ENCODE measurements at regions of chr5 and their contacts with region 1.

Region 1: DNA sequence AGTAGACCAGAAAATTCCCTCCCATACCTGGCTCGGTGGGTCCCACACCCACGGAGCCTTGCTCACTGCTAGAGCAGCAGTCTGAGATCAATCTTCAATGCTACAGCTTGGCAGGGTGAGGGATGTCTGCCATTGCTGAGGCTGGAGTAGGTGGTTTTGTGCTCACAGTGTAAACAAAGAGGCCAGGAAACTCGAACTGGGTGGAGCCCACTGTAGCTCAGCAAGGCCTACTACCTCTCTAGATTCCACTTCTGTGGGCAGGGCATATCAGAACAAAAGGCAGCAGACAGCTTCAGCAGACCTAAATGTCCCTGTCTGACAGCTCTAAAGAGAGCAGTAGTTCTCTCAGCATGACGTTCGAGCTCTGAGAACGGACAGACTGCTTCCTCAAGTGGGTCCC is 5.6 kb upstream of the GZMA start:
- DNase-seq: peak; percentile 13 to 81 (median 60)
- ATAC-seq: peak; percentile 85
- H3K4me3 ChIP-seq: peak overlapping the region in 1 of 2 experiments; percentile 17
- H3K4me3 Mint-ChIP-seq: peak overlapping the region; percentile 57
- H3K27ac ChIP-seq: peak overlapping the region; percentile 48 to 79
- H3K27ac Mint-ChIP-seq: peak overlapping the region; percentile 92
- H3K4me1 ChIP-seq: peaks cover 61% of the 10 kb centered on the region
- H3K4me1 Mint-ChIP-seq: peaks cover 86% of the 10 kb centered on the region
- H3K27me3 ChIP-seq: no peaks in the 10 kb centered on the region
- H3K27me3 Mint-ChIP-seq: no peaks in the 10 kb centered on the region
- CTCF ChIP-seq: no peak

Region 2: GRCh38 chr5:54135042-54135441 is 961.8 kb before region 1 on chr5:
- CTCF ChIA-PET with region 1: no interaction called
- POLR2A ChIA-PET with region 1: no interaction called
- intact Hi-C with region 1: no loop called
- DNase-seq: no peak
- ATAC-seq: no peak
- H3K4me3 ChIP-seq: no peak overlapping the region
- H3K4me3 Mint-ChIP-seq: no peak overlapping the region
- H3K27ac ChIP-seq: no peak overlapping the region
- H3K27ac Mint-ChIP-seq: no peak overlapping the region
- H3K4me1 ChIP-seq: no peaks in the 10 kb centered on the region
- H3K4me1 Mint-ChIP-seq: no peaks in the 10 kb centered on the region
- H3K27me3 ChIP-seq: no peaks in the 10 kb centered on the region
- H3K27me3 Mint-ChIP-seq: no peaks in the 10 kb centered on the region
- CTCF ChIP-seq: no peak

Region 3: DNA sequence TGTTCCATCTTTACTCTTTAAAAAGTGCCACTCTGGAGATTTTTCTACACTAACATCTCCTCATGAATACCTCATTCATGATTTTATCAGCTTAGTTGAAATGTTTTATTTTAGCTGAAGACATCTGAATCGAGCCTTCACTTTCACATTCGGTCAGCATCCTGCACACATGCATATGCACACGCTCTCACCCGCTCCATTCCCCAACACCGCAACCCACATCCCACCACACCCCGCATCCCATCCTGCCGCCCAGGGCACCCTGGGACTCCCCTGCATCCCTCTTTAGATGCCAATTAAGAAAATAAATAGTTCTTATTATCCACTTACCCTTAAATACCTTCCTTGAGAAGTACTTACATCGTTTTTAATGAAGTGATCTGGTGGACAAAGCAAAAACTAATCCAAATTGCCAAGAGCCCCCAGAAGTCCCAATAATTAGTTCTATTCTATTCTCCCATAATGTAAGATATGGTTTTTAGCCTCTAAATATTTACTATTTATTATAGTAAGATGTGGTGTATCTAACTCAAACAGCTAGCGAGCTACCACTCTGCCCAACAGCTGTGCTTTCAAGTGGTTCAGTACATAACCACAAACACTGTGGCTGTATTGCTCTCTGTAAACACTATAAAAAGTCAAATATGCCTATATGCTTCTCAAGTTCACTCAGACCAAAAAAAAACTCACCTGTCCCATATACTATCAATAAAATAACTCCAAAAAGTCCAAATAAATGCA is 34.7 kb before region 1 on chr5:
- CTCF ChIA-PET with region 1: interaction called, 3 read pairs
- POLR2A ChIA-PET with region 1: interaction called, 14 read pairs
- intact Hi-C with region 1: loop called (anchors 1 to 5 kb)
- DNase-seq: peak in 8 of 9 experiments; percentile 16 to 76 (median 49)
- ATAC-seq: peak; percentile 76
- H3K4me3 ChIP-seq: peak overlapping the region; percentile 30 to 44
- H3K4me3 Mint-ChIP-seq: peak overlapping the region; percentile 81
- H3K27ac ChIP-seq: peak overlapping the region; percentile 19 to 66
- H3K27ac Mint-ChIP-seq: peak overlapping the region; percentile 85
- H3K4me1 ChIP-seq: peaks cover 45% of the 10 kb centered on the region
- H3K4me1 Mint-ChIP-seq: peaks cover 57% of the 10 kb centered on the region
- H3K27me3 ChIP-seq: no peaks in the 10 kb centered on the region
- H3K27me3 Mint-ChIP-seq: no peaks in the 10 kb centered on the region
- CTCF ChIP-seq: no peak

Region 4: DNA sequence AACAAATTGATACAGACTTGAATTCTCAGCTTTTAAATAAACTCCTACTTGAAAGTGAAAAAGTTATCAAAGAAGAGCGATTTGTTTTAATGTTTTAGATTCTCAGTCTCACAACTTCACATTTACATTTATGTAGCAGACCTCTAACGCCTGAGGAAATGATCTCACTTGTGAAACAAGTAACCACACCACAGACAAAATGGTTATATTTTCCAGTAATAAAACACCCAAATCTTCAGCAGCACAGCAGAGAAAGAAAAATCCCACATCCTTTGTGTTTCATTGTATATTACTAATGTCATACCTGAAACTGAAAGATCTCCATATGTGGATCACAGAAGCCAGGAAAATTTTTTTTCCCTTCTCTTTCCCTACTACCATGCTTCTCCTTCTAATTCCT is 24.2 kb before region 1 on chr5:
- CTCF ChIA-PET with region 1: interaction called, 5 read pairs
- POLR2A ChIA-PET with region 1: interaction called, 5 read pairs
- intact Hi-C with region 1: loop called in 1 of 2 experiments (anchors 2 kb)
- DNase-seq: peak in 2 of 9 experiments; percentile 53 to 75
- ATAC-seq: peak; percentile 89
- H3K4me3 ChIP-seq: no peak overlapping the region
- H3K4me3 Mint-ChIP-seq: peak overlapping the region; percentile 39
- H3K27ac ChIP-seq: peak overlapping the region; percentile 20 to 65
- H3K27ac Mint-ChIP-seq: peak overlapping the region; percentile 87
- H3K4me1 ChIP-seq: peaks cover 38% of the 10 kb centered on the region
- H3K4me1 Mint-ChIP-seq: peaks cover 39% of the 10 kb centered on the region
- H3K27me3 ChIP-seq: no peaks in the 10 kb centered on the region
- H3K27me3 Mint-ChIP-seq: no peaks in the 10 kb centered on the region
- CTCF ChIP-seq: no peak

Region 5: DNA sequence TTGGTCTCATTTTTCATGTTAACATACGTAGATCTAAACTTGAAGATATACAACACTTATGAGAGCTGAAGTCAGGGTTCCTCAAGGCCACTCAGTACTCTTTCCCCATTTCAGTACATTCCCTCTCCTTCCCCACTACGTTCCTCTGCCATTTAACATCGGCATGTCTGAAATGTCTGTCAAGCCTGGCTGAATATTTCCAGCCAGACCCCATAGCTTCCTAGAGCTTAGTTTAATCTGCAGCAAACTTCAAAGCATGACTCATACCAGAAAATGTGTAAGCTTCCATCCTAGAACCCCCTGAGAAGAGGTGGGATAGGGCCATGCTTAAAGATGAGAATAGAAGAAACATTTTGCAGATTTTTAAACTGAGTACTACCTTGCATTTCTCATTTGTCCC is 11.8 kb after region 1 on chr5:
- CTCF ChIA-PET with region 1: interaction called, 7 read pairs
- POLR2A ChIA-PET with region 1: interaction called, 12 read pairs
- intact Hi-C with region 1: no loop called
- DNase-seq: no peak
- ATAC-seq: no peak
- H3K4me3 ChIP-seq: no peak overlapping the region
- H3K4me3 Mint-ChIP-seq: no peak overlapping the region
- H3K27ac ChIP-seq: no peak overlapping the region
- H3K27ac Mint-ChIP-seq: peak overlapping the region; percentile 45
- H3K4me1 ChIP-seq: peaks cover 26% of the 10 kb centered on the region
- H3K4me1 Mint-ChIP-seq: peaks cover 50% of the 10 kb centered on the region
- H3K27me3 ChIP-seq: no peaks in the 10 kb centered on the region
- H3K27me3 Mint-ChIP-seq: no peaks in the 10 kb centered on the region
- CTCF ChIP-seq: no peak

Region 6: DNA sequence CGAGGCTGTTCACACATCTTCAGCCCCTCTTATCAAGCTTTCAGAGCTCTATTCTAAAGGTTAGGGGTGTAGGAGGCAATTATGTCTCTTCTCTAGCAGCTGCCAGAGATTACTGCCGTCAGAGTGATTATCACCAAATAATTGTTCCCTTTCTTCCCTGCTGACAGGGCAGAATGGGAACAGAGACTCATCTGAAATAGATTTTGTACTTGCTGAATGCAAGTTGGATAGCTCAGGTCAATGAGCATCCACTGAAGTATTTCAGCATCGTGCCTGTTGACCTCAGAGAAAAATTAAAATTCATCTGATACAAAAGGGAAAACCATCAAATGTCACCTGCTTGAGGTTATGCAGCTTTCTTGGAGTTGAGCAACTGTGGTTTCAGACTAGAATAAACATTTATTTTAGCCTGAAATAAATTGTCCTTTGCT is 1504.8 kb after region 1 on chr5:
- CTCF ChIA-PET with region 1: no interaction called
- POLR2A ChIA-PET with region 1: no interaction called
- intact Hi-C with region 1: no loop called
- DNase-seq: no peak
- ATAC-seq: no peak
- H3K4me3 ChIP-seq: no peak overlapping the region
- H3K4me3 Mint-ChIP-seq: no peak overlapping the region
- H3K27ac ChIP-seq: no peak overlapping the region
- H3K27ac Mint-ChIP-seq: no peak overlapping the region
- H3K4me1 ChIP-seq: no peaks in the 10 kb centered on the region
- H3K4me1 Mint-ChIP-seq: no peaks in the 10 kb centered on the region
- H3K27me3 ChIP-seq: no peaks in the 10 kb centered on the region
- H3K27me3 Mint-ChIP-seq: no peaks in the 10 kb centered on the region
- CTCF ChIP-seq: no peak